GM12878 (cell line): ENCODE measurements at regions of chr5 and their contacts with region 1.

Region 1: GRCh38 chr5:88819301-88819999 is 63.5 kb downstream of the MEF2C start:
- DNase-seq: no peak
- ATAC-seq: peak; percentile 35
- H3K4me3 ChIP-seq: peak overlapping the region; percentile 67
- H3K27ac ChIP-seq: peak overlapping the region; percentile 86
- H3K4me1 ChIP-seq: peaks cover 23% of the 10 kb centered on the region
- H3K27me3 ChIP-seq: no peaks in the 10 kb centered on the region
- CTCF ChIP-seq: no peak
- EP300 ChIP-seq: no peak
- POLR2A ChIP-seq: no peak
- RAD21 ChIP-seq: no peak

Region 2: DNA sequence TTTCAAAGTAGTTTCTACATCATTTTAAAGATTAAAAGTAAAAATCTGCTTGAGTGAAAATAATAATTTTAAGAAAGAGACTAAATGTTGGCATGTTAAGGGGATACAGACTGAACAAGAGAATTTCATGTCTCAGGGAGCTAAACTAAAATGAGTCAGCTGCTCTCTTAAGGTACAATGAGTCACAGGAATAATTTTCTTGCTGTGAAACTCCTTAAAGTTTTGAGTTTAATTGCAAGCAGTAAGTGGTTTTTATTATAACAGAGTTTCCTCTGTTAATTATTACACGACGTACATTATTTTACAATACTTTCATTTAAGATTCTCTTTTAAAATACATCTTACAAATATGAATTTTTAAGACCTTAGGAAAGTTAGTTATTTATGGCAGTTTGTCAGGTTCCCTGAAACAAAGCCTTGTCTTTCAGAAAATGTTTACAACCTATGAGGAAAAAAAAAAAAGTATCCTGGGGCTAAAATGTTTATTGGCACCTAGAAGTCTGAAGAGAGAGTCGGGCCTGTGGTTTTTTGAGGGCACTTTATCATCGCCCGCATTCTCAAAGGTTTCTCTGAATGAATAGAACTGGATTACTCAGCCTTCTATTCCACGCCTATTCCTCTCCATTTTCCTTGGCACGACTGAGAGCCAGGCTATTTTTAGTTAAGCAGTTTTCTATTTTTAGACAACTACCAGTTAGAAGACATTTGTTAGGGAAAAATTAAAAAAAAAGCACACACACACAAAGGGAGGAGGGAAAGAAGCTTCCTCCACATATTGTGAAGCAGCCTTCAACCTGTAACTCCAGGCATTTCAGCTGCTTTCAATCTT is 33.8 kb before region 1 on chr5:
- CTCF ChIA-PET with region 1: interaction called, 3 read pairs
- POLR2A ChIA-PET with region 1: interaction called, 4 read pairs
- RAD21 ChIA-PET with region 1: interaction called, 15 read pairs
- SMC1A ChIA-PET with region 1: interaction called, 49 read pairs
- in situ Hi-C with region 1: no loop called
- intact Hi-C with region 1: no loop called
- DNase-seq: peak; percentile 43
- ATAC-seq: peak; percentile 79
- H3K4me3 ChIP-seq: 0 out of 2 replicates have a peak overlapping the region, but pooled peaks have one; percentile 11
- H3K27ac ChIP-seq: peak overlapping the region; percentile 65
- H3K4me1 ChIP-seq: peaks cover 7% of the 10 kb centered on the region; the same call in 1 of the 2 replicates
- H3K27me3 ChIP-seq: no peaks in the 10 kb centered on the region
- CTCF ChIP-seq: no peak
- EP300 ChIP-seq: peak in 1 of 2 experiments; percentile 61; a peak in 3 of 4 replicates
- POLR2A ChIP-seq: no peak
- RAD21 ChIP-seq: no peak

Region 3: DNA sequence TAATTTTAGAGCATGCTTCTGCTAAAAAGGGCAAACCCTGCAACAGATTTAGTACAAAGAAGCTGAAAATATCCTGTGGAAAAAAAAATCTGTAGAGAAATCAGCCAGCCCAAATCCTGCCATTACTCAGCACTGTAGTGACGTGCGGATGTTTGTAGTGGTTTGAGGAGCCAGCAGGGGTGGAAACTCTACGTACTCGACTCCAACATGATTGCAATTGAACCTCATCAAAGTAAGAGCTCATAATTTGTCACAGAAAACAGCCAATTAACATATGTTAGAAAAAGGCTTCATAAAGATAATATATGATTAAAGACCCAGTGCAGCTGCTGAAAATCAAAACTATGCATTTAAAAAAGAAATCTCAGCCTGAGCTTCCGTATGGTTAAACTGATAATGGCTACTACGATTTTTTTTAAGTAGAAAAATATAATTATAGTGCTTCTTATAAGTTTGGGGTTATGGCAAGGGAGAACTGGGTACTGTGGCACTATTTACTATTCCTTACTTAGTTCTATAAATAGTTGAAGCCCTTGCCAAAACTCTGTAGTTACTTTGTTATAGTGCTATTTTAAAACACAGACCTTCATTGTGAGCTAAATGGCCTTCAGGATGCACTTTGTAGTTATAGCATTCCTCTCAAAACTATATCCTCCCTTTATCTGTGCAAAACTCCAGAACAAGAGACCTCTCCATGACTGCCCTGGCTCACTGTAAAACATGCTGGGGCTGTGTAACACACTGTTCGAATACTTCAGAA is 14.1 kb after region 1 on chr5:
- CTCF ChIA-PET with region 1: interaction called, 37 read pairs
- POLR2A ChIA-PET with region 1: interaction called, 39 read pairs
- RAD21 ChIA-PET with region 1: interaction called, 86 read pairs
- SMC1A ChIA-PET with region 1: interaction called, 90 read pairs
- in situ Hi-C with region 1: no loop called
- intact Hi-C with region 1: no loop called
- DNase-seq: no peak
- ATAC-seq: peak; percentile 65
- H3K4me3 ChIP-seq: peak overlapping the region; percentile 39; the same call in 1 of the 2 replicates
- H3K27ac ChIP-seq: peak overlapping the region; percentile 80
- H3K4me1 ChIP-seq: peaks cover 36% of the 10 kb centered on the region
- H3K27me3 ChIP-seq: no peaks in the 10 kb centered on the region
- CTCF ChIP-seq: no peak
- EP300 ChIP-seq: peak in 1 of 2 experiments; percentile 39; a peak in 1 of 4 replicates
- POLR2A ChIP-seq: no peak
- RAD21 ChIP-seq: no peak

Region 4: GRCh38 chr5:88889189-88890069 is 70.0 kb after region 1 on chr5:
- CTCF ChIA-PET with region 1: interaction called, 5 read pairs
- POLR2A ChIA-PET with region 1: interaction called, 31 read pairs
- RAD21 ChIA-PET with region 1: interaction called, 82 read pairs
- SMC1A ChIA-PET with region 1: interaction called, 182 read pairs
- in situ Hi-C with region 1: no loop called
- intact Hi-C with region 1: no loop called
- DNase-seq: no peak
- ATAC-seq: peak; percentile 56
- H3K4me3 ChIP-seq: peak overlapping the region; percentile 87
- H3K27ac ChIP-seq: peak overlapping the region; percentile 98
- H3K4me1 ChIP-seq: peaks cover 3% of the 10 kb centered on the region
- H3K27me3 ChIP-seq: no peaks in the 10 kb centered on the region
- CTCF ChIP-seq: no peak
- EP300 ChIP-seq: no peak
- POLR2A ChIP-seq: peak; percentile 92
- RAD21 ChIP-seq: peak; percentile 2; the same call in 1 of the 2 replicates

Region 5: GRCh38 chr5:88984040-88984439 is 164.6 kb after region 1 on chr5:
- CTCF ChIA-PET with region 1: no interaction called
- POLR2A ChIA-PET with region 1: no interaction called
- RAD21 ChIA-PET with region 1: no interaction called
- SMC1A ChIA-PET with region 1: no interaction called
- in situ Hi-C with region 1: no loop called
- intact Hi-C with region 1: no loop called
- DNase-seq: no peak
- ATAC-seq: no peak
- H3K4me3 ChIP-seq: no peak overlapping the region
- H3K27ac ChIP-seq: no peak overlapping the region
- H3K4me1 ChIP-seq: 0 out of 2 replicates have a peak, but pooled peaks cover 2% of the 10 kb centered on the region
- H3K27me3 ChIP-seq: no peaks in the 10 kb centered on the region
- CTCF ChIP-seq: no peak
- EP300 ChIP-seq: no peak
- POLR2A ChIP-seq: no peak
- RAD21 ChIP-seq: no peak